ENCODE measurements at regions of chr1 and their contacts with region 1.

Region 1: DNA sequence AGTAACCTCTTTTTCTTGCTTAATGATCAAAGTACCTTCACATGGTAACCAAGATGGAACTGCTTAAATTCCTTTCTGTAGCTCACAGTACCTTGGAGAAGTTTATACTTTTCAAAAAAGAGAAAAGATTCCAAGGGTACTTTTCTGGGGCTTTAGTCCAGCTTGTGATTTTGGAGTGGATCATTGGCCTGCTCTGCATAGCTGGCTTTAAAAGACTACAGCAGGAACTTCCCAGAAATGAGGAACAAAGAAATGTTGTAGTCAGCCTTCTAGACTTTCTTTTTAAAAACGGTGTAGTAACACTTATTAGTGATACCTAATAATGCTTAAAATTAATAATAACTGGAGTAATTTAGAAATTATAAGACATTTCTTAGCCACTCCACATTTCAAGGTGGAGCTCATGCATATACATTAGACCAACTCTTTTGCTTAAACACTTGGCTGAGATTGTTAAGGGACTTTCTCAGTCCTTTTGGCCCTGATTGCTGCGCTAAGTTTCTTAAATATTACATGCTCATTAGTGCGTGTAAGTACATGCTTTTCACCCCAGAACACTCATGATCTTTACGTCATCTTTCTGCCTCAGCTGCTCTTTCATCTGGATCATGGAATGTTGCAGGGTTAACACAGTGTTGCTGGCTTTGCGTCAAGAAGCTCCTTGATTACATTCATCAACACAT is 57.3 kb downstream of the SDCCAG8 start:
- DNase-seq: no peak
- H3K4me3 ChIP-seq: no peak overlapping the region
- H3K4me1 ChIP-seq: peaks cover 21% of the 10 kb centered on the region
- H3K27me3 ChIP-seq: no peaks in the 10 kb centered on the region

Region 2: GRCh38 chr1:242467556-242468145 is 845.4 kb before region 1 on chr1:
- in situ Hi-C with region 1: loop called (anchors 25 kb)
- DNase-seq: peak; percentile 73 to 78
- H3K4me3 ChIP-seq: no peak overlapping the region
- H3K4me1 ChIP-seq: no peaks in the 10 kb centered on the region
- H3K27me3 ChIP-seq: no peaks in the 10 kb centered on the region

Measured in HAP-1 (cell line).